ENCODE measurements at regions of chr3 and their contacts with region 1.

Region 1: GRCh38 chr3:196502775-196503195 is 783 bp downstream of the RNF168 start:
- DNase-seq: peak; percentile 41 to 63
- H3K4me3 ChIP-seq: peak overlapping the region; percentile 80
- H3K27ac ChIP-seq: peak overlapping the region; percentile 89
- H3K4me1 ChIP-seq: peaks cover 32% of the 10 kb centered on the region
- H3K27me3 ChIP-seq: no peaks in the 10 kb centered on the region
- CTCF ChIP-seq: no peak

Region 2: DNA sequence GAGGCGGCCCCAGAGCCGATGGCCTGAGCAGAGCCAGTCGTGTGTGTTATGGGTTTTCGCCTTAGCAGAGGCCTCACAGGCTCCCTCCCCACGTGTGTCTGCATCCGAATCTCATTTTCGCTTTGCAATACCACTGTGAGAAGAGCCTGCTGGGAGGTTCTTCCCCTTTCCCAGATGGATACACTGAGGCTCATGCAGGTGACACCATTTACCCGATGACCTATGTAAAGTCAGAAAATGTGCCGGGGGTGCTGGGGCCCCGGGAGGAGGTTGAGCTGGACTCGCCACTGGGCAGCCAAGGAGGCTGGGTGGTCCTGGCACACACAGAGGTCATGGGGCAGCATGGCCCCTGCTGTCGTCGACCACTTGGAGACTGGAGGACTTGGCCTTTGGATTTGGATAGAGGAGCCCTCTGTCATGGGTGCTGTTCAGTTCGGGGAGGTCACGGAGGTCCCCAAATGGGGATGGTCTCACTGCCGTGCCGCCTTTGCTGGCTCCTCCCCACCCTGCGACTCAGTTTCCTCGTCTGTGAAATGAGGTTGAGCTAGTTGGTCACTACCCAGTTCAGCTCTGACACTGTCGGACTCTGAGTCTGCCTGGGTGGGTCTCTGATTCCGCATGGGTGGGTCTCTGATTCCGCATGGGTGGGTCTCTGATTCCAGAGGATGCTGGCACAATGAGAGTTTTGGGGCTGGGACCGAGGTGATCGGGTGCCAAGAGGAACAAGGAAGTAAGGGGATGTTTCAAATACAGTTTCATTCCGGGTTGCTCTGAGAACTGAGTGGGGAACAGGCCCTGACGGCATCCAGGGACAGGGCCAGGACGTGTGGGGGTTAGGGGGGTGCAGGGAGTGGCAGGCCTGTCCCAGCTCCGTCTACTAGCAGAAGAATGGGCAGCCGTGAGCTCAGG is 667.9 kb before region 1 on chr3:
- CTCF ChIA-PET with region 1: no interaction called
- POLR2A ChIA-PET with region 1: interaction called, 19 read pairs
- intact Hi-C with region 1: no loop called
- DNase-seq: no peak
- H3K4me3 ChIP-seq: no peak overlapping the region
- H3K27ac ChIP-seq: no peak overlapping the region
- H3K4me1 ChIP-seq: no peaks in the 10 kb centered on the region
- H3K27me3 ChIP-seq: no peaks in the 10 kb centered on the region
- CTCF ChIP-seq: no peak

Region 3: GRCh38 chr3:196339493-196340254 is 163.1 kb before region 1 on chr3:
- CTCF ChIA-PET with region 1: no interaction called
- POLR2A ChIA-PET with region 1: interaction called, 4 read pairs
- intact Hi-C with region 1: loop called (anchors 1 kb)
- DNase-seq: peak; percentile 65 to 86
- H3K4me3 ChIP-seq: peak overlapping the region; percentile 68
- H3K27ac ChIP-seq: peak overlapping the region; percentile 95
- H3K4me1 ChIP-seq: peaks cover 47% of the 10 kb centered on the region
- H3K27me3 ChIP-seq: no peaks in the 10 kb centered on the region
- CTCF ChIP-seq: no peak

Region 4: GRCh38 chr3:196471551-196471950 is 31.2 kb before region 1 on chr3:
- CTCF ChIA-PET with region 1: interaction called, 7 read pairs
- POLR2A ChIA-PET with region 1: interaction called, 11 read pairs
- intact Hi-C with region 1: no loop called
- DNase-seq: no peak
- H3K4me3 ChIP-seq: no peak overlapping the region
- H3K27ac ChIP-seq: no peak overlapping the region
- H3K4me1 ChIP-seq: no peaks in the 10 kb centered on the region
- H3K27me3 ChIP-seq: no peaks in the 10 kb centered on the region
- CTCF ChIP-seq: no peak

Region 5: DNA sequence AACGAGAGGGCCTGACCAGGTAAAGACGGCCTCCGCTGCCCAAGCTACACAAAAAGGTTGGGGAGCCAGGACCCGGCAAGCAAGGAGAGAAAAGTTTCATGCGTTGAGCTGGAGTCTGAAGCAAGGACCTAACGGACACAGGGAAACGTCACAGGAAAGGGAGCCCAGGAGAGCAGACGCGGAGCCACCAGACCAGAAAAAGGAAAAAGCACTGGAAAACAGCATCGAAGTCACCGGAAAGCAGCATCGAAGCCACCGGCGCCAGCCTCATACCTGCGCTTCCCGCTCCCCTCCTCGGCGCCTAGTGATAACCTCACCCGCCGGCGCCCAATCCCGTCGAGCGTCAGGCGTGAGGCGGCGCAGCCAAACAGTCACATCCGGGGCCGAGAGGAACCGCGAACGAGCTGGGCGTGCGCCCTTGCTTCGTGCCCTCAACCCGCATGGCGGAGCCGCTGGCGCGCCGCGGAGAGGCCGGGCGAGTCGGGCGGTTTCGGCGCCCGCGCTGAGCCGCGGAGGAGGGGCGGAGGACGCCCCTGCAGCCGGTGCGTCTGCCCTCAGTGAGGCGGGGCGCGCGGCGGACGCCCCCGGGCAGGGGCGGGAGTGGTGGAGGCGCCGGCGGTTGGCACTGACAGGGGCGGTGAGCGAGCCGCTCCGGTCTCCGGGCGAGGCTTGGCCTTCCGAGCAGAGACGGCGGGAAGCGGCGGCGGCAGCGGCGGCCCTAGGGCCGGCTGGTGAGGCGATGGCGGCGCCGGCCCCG is 65.6 kb after region 1 on chr3 and contains the starts of genes FBXO45 and WDR53:
- CTCF ChIA-PET with region 1: no interaction called
- POLR2A ChIA-PET with region 1: no interaction called
- intact Hi-C with region 1: loop called (anchors 2 kb)
- DNase-seq: peak; percentile 90 to 98
- H3K4me3 ChIP-seq: peak within 1 kb of the TSS; percentile 75
- H3K27ac ChIP-seq: peak within 1 kb of the TSS; percentile 30
- H3K4me1 ChIP-seq: peaks cover 34% of the 10 kb centered on the region
- H3K27me3 ChIP-seq: no peaks in the 10 kb centered on the region
- CTCF ChIP-seq: no peak
- total RNA-seq, gene FBXO45: 16.5 and 21.3 TPM in 2 replicates
- total RNA-seq, gene WDR53: 33.5 and 34.8 TPM in 2 replicates